ENCODE measurements at regions of chr17 and their contacts with region 1.

Region 1: DNA sequence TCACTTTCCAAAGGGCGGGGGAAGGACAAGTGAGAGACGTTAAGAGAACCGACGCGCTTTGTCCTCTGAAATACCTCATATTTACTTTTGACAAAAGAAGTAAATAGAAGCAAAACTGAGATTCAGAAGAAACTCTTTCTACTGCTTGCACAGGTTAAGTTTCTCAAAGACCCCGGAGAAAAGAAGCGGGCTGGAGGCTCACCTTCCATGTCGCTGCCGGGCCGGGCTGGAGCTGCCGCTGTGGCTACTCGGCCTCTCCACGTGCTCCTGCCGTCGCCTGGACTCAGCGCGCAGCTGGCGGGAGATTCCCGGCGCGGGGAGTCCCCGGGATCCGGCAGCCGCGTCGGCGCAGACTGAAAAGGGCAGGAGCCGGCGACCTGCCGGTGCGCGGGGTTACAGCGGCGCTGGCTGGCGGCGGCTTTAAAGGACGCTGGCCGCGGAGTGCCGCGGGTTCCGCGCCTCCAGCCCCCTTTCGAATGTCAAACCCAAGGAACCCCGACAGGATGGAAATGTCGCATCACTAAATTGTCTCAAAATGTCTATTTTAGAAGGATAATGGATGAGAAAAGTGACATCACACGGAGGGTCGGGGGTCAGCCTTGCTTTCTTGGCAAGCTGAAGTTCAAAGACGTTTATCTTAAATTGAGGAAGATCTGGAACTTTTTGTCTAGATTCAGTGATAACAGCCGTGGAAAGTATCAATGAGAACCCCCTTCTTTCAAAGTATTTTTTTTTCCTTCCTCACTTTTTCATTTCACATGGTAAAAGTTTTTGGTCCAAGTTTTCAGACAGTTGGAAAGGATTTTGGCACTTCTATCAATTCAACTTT is at the start of gene IKZF3:
- DNase-seq: peak; percentile 55 to 95 (median 73)
- ATAC-seq: peak; percentile 75
- H3K4me3 ChIP-seq: peak within 1 kb of the TSS; percentile 80
- H3K4me3 Mint-ChIP-seq: peak within 1 kb of the TSS; percentile 96
- H3K27ac ChIP-seq: peak within 1 kb of the TSS; percentile 88 to 89
- H3K27ac Mint-ChIP-seq: peak within 1 kb of the TSS; percentile 94
- H3K4me1 ChIP-seq: peaks cover 37% of the 10 kb centered on the region
- H3K4me1 Mint-ChIP-seq: peaks cover 81% of the 10 kb centered on the region
- H3K27me3 ChIP-seq: no peaks in the 10 kb centered on the region
- H3K27me3 Mint-ChIP-seq: no peaks in the 10 kb centered on the region
- CTCF ChIP-seq: peak; percentile 54
- total RNA-seq, gene IKZF3: 39.7 to 39.9 TPM

Region 2: DNA sequence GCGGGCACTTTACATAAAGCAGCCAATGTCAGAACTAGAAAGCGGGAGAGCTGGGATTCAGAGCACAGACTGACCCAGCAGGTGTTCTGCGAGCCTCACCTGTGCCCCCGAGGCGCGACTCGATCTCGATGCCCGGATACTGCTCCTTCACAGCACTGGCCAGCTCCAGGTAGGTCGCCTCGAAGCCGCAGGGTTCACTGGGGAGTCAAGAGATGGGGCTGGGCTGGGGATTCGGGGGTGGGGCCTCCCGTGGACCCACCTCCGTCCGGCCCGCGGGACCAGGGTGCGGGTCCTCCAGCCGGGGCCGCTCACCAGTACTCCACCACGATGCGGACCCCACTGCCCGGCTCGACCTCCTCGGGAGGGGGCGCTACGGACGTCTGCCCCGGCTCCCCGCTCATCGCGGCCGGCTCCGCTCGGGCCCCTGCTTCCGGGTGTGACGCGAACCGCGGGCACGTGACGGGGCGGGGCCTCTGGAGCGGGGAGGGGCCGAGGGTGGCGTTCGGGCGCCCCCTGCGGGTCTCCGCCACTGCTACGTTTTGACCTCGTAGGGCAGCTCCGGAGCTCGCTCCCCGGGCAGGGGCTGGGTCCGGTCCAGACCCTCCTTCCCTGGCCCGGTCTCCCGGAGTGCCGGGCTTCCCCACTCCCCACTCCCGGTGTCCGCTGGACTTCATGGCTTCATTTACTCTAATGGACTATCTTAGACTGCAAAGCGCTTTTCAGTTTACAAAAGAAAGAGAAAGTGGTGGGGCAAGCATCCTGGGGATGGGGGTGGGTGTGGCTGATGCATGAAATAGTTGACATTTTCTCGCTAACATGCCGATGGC is 133.8 kb before region 1 on chr17 and contains the start of gene MIEN1:
- CTCF ChIA-PET with region 1: interaction called, 21 read pairs
- POLR2A ChIA-PET with region 1: interaction called, 16 read pairs
- intact Hi-C with region 1: loop called in 1 of 2 experiments (anchors 1 kb)
- DNase-seq: peak; percentile 86 to 98 (median 94)
- ATAC-seq: peak; percentile 91
- H3K4me3 ChIP-seq: peak within 1 kb of the TSS; percentile 79
- H3K4me3 Mint-ChIP-seq: peak within 1 kb of the TSS; percentile 91
- H3K27ac ChIP-seq: peak within 1 kb of the TSS; percentile 90 to 91
- H3K27ac Mint-ChIP-seq: peak within 1 kb of the TSS; percentile 88
- H3K4me1 ChIP-seq: peaks cover 23% of the 10 kb centered on the region
- H3K4me1 Mint-ChIP-seq: peaks cover 17% of the 10 kb centered on the region
- H3K27me3 ChIP-seq: no peaks in the 10 kb centered on the region
- H3K27me3 Mint-ChIP-seq: no peaks in the 10 kb centered on the region
- CTCF ChIP-seq: peak; percentile 91
- total RNA-seq, gene MIEN1: 31.5 to 32.3 TPM

Region 3: DNA sequence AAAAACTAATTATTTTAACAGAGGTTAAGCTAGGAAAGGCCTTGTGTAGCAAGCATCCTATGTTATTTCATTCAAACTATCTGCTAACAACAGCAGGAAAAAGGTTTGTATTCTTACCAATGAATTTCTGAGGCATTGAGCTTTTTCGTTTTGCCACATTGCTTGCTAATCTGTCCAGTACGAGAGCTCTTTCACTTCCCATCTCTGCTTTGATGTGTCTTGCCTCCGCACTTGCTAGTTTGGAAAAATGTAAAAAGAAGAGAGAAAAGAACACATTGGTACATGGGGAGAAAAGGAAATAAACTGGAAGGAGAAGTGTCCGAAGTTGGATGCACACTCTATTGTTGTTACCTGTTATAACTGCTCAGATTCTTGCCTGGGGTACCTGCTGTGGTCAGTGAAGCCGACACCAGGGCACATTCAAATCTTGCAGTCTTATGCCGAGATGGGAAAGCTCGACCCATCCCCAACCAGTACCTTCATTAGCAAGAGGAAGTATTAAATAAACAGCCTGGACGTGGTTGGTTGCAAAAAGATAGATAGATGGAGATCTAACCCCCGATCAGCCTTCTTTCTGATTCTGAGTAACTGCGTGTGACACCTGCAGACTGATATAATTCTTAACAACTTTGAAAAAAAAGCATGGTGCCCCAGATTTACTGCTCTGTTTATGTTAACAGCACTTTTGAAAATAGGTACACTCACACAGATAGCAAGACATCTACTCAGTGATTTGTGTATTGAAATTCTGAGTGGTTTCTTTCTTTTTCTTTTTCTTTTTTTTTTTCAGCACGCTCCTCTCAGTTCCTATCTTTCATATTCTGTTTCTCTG is 86.4 kb before region 1 on chr17:
- CTCF ChIA-PET with region 1: interaction called, 14 read pairs
- POLR2A ChIA-PET with region 1: interaction called, 5 read pairs
- intact Hi-C with region 1: loop called in 1 of 2 experiments (anchors 2 kb)
- DNase-seq: peak in 4 of 14 experiments; percentile 42 to 67 (median 66)
- ATAC-seq: peak; percentile 58
- H3K4me3 ChIP-seq: peak overlapping the region; percentile 64
- H3K4me3 Mint-ChIP-seq: peak overlapping the region; percentile 91
- H3K27ac ChIP-seq: peak overlapping the region; percentile 74 to 78
- H3K27ac Mint-ChIP-seq: peak overlapping the region; percentile 84
- H3K4me1 ChIP-seq: peaks cover 62% of the 10 kb centered on the region
- H3K4me1 Mint-ChIP-seq: peaks cover 89% of the 10 kb centered on the region
- H3K27me3 ChIP-seq: no peaks in the 10 kb centered on the region
- H3K27me3 Mint-ChIP-seq: no peaks in the 10 kb centered on the region
- CTCF ChIP-seq: no peak

Region 4: DNA sequence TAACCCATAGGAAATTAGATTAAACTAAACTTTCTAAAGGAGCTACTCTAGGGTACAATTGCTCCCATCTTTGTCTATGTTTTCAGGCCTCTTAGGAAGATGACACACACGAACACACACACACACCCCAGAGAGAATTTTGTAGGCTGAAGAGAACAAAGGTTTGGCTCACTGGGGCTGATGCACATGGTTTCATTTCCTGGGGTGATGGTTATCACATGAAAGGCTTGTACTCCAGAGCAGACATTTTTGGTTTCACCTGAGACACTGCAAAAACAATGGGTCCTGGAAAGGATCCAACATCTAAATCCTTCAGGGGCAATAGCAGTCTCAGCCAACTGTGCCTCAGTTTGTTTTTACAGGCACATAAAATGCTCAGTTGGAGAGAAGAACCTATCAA is 63.6 kb before region 1 on chr17:
- CTCF ChIA-PET with region 1: interaction called, 3 read pairs
- POLR2A ChIA-PET with region 1: interaction called, 3 read pairs
- intact Hi-C with region 1: loop called in 1 of 2 experiments (anchors 5 kb)
- DNase-seq: peak in 13 of 14 experiments; percentile 37 to 88 (median 51)
- ATAC-seq: peak; percentile 98
- H3K4me3 ChIP-seq: no peak overlapping the region
- H3K4me3 Mint-ChIP-seq: peak overlapping the region; percentile 39
- H3K27ac ChIP-seq: peak overlapping the region; percentile 24 to 58
- H3K27ac Mint-ChIP-seq: peak overlapping the region; percentile 92
- H3K4me1 ChIP-seq: peaks cover 33% of the 10 kb centered on the region
- H3K4me1 Mint-ChIP-seq: peaks cover 65% of the 10 kb centered on the region
- H3K27me3 ChIP-seq: no peaks in the 10 kb centered on the region
- H3K27me3 Mint-ChIP-seq: no peaks in the 10 kb centered on the region
- CTCF ChIP-seq: no peak

Region 5: DNA sequence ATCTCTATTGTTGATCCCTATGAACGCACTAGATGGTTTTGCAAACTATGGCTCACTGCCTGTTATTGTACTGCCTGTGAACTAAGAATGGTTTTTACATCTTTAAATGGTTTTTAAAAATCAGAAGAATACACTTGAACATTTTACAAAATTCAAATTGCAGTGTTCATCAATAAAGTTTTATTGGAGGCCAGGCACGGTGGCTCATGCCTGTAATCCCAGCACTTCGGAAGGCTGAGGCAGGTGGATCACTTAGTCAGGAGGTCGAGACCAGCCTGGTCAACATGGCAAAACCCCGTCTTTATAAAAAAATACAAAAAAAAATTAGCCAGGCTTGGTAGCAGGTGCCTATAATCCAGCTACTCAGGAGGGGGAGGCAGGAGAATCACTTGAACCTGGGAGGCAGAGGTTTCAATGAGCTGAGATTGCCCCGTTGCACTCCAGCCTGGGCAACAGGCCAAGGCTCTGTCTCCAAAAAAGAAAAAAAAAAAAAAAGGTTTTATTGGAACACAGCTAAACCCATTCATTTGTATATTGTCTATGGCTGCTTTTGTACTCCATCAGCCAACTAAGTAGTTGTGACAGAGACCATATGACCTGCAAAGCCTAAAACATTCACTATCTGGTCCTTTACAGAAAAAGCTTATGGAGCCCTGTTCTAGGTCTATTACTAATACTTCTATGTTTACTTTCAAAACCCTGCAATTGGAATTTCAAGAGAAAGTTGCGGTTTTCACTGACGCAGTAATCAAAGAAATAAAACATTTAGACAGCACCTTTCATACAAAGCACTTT is 18.9 kb before region 1 on chr17:
- CTCF ChIA-PET with region 1: interaction called, 10 read pairs
- POLR2A ChIA-PET with region 1: interaction called, 9 read pairs
- intact Hi-C with region 1: loop called in 1 of 2 experiments (anchors 2 kb)
- DNase-seq: no peak
- ATAC-seq: peak; percentile 17
- H3K4me3 ChIP-seq: no peak overlapping the region
- H3K4me3 Mint-ChIP-seq: peak overlapping the region; percentile 31
- H3K27ac ChIP-seq: peak overlapping the region in 1 of 2 donors; percentile 10
- H3K27ac Mint-ChIP-seq: peak overlapping the region; percentile 86
- H3K4me1 ChIP-seq: peaks cover 26% of the 10 kb centered on the region
- H3K4me1 Mint-ChIP-seq: peaks cover 79% of the 10 kb centered on the region
- H3K27me3 ChIP-seq: no peaks in the 10 kb centered on the region
- H3K27me3 Mint-ChIP-seq: no peaks in the 10 kb centered on the region
- CTCF ChIP-seq: no peak

Region 6: DNA sequence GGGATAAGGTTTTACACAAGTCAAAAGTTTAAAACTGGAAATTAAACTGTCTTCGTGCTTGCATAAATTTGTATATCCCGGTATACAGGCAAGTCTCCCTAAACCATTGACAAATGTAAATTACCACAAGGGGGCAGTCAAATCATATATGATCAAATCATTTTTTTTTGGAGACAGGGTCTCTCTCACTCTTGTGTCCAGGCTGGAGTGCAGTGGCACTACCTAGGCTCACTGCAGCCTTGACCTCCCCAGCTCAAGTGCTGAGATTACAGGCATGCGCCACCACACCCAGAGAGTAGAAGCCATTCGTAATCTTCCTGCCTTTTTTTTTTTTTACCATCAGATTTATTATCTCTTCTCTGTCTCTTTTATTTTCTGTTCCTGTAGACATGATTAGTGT is 535.1 kb after region 1 on chr17:
- CTCF ChIA-PET with region 1: no interaction called
- POLR2A ChIA-PET with region 1: no interaction called
- intact Hi-C with region 1: no loop called
- DNase-seq: peak in 5 of 14 experiments; percentile 7 to 80 (median 52)
- ATAC-seq: peak; percentile 71
- H3K4me3 ChIP-seq: no peak overlapping the region
- H3K4me3 Mint-ChIP-seq: no peak overlapping the region
- H3K27ac ChIP-seq: no peak overlapping the region
- H3K27ac Mint-ChIP-seq: no peak overlapping the region
- H3K4me1 ChIP-seq: peaks cover 3% of the 10 kb centered on the region
- H3K4me1 Mint-ChIP-seq: peaks cover 22% of the 10 kb centered on the region
- H3K27me3 ChIP-seq: no peaks in the 10 kb centered on the region
- H3K27me3 Mint-ChIP-seq: no peaks in the 10 kb centered on the region
- CTCF ChIP-seq: peak; percentile 91

Measured in CD4-positive, alpha-beta T cell (primary cell).